Activated CD8-positive, alpha-beta memory T cell treated with anti-CD3 and anti-CD28 coated beads, Interleukin-2, amount 10 ng/mL, durations not matched to agents 7 days and 5 days (primary cell): ENCODE measurements at regions of chr2 and their contacts with region 1.

Region 1: DNA sequence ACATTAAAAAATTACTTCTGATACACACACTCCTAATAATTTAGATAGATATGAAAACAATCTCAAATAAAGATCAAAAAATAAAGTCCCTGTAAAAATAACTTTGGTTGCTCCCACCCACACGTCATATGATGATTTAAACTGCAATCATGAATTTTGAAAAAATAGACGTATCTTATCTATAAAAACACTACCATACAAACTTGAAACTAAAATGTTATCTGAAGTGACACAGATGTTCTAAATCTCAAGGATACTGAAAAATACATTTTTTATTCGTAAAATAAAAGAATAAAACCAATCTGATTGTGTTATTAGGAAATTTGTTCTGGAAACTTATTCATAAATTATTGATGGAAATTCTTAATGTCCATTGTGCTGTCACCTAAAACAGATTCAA is 8.1 kb upstream of the BOLA3 start:
- DNase-seq: no peak
- ATAC-seq: no peak
- H3K4me3 Mint-ChIP-seq: no peak overlapping the region
- H3K27ac Mint-ChIP-seq: no peak overlapping the region
- H3K4me1 Mint-ChIP-seq: peaks cover 17% of the 10 kb centered on the region
- H3K27me3 Mint-ChIP-seq: no peaks in the 10 kb centered on the region

Region 2: DNA sequence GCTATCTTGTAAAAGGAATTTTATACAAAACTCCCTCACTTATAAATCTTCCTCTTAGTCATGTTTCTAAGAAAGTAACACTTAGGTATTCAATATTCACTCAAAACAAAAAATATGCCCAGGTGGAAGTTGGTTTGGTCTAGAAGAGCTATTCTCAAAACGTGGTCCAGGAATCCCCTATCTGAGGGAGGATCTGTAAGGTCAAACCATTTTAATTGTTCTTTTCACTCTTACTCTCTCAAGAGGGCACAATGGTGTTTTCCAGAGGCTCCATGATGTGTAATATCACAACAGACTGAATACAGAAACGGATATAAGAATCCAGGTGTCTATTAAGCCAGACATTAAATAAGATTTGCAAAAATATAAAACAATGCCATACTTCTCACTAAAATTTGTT is 12.9 kb after region 1 on chr2:
- CTCF ChIA-PET with region 1: interaction called, 13 read pairs
- DNase-seq: no peak
- ATAC-seq: no peak
- H3K4me3 Mint-ChIP-seq: no peak overlapping the region
- H3K27ac Mint-ChIP-seq: no peak overlapping the region
- H3K4me1 Mint-ChIP-seq: peaks cover 18% of the 10 kb centered on the region
- H3K27me3 Mint-ChIP-seq: no peaks in the 10 kb centered on the region

Region 3: GRCh38 chr2:74347742-74348141 is 191.9 kb after region 1 on chr2:
- CTCF ChIA-PET with region 1: no interaction called
- DNase-seq: no peak
- ATAC-seq: no peak
- H3K4me3 Mint-ChIP-seq: no peak overlapping the region
- H3K27ac Mint-ChIP-seq: no peak overlapping the region
- H3K4me1 Mint-ChIP-seq: peaks cover 16% of the 10 kb centered on the region
- H3K27me3 Mint-ChIP-seq: peaks cover 10% of the 10 kb centered on the region

Region 4: GRCh38 chr2:74399785-74400184 is 244.0 kb after region 1 on chr2:
- CTCF ChIA-PET with region 1: no interaction called
- DNase-seq: no peak
- ATAC-seq: peak; percentile 68
- H3K4me3 Mint-ChIP-seq: no peak overlapping the region
- H3K27ac Mint-ChIP-seq: no peak overlapping the region
- H3K4me1 Mint-ChIP-seq: no peaks in the 10 kb centered on the region
- H3K27me3 Mint-ChIP-seq: peaks cover 13% of the 10 kb centered on the region